Naive thymus-derived CD4-positive, alpha-beta T cell (primary cell): ENCODE measurements at regions of chr16 and their contacts with region 1.

Region 1: DNA sequence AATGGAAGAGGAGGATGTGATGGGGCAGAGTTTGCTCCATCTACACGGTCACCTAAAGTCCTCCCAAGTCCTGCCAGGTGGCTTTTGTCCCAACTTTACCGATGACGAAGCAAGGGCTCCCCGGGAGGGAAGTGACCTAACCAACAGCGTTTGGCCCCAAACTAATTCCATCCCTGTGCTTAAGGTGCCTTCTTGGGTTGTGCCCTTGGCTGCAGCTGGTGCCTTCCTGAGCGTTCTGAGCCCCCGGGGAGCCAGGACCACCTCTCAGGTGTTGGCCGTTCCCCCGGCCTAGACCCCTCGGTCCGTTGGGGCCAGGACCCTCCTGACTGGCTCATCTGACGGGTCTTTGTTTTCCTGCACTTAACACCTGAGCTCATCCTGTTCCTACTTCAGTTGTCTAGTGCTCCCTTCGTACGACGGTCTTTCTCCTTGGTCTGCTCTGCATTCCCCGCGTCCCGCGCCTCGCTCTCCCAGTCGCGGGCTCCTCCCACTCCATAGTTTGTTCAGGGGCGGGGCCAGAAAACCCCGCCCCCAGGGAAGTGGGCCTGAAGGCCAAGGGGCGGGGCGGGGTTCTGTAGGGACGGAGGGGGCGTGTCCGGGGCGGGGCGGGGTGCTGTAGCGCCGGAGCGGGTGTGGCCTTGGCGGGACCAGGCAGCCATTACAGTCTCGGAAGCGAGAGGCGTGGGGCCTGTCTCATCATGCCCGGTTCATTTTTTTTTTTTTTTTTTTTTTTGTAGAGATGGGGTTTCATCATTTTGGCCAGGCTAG is 822 bp upstream of the ZSCAN10 start:
- DNase-seq: peak; percentile 67 to 94 (median 75)
- ATAC-seq: peak; percentile 94
- H3K4me3 ChIP-seq: peak overlapping the region; percentile 46
- H3K4me3 Mint-ChIP-seq: peak overlapping the region; percentile 71 to 98 (median 82)
- H3K27ac ChIP-seq: peak overlapping the region; percentile 35
- H3K27ac Mint-ChIP-seq: peak overlapping the region; percentile 74 to 93 (median 86)
- H3K4me1 ChIP-seq: peaks cover 25 to 31% of the 10 kb centered on the region in 2 donors
- H3K4me1 Mint-ChIP-seq: peaks cover 27 to 65% (median 54%) of the 10 kb centered on the region in 7 donors
- H3K27me3 ChIP-seq: no peaks in the 10 kb centered on the region
- H3K27me3 Mint-ChIP-seq: no peaks in the 10 kb centered on the region

Region 2: GRCh38 chr16:3065069-3065741 is 34.7 kb before region 1 on chr16 and contains the start of gene IL32:
- CTCF ChIA-PET with region 1: interaction called, 7 read pairs
- POLR2A ChIA-PET with region 1: interaction called, 65 read pairs
- intact Hi-C with region 1: no loop called
- DNase-seq: peak in 8 of 9 donors; percentile 43 to 69 (median 64)
- ATAC-seq: peak; percentile 78
- H3K4me3 ChIP-seq: peak within 1 kb of the TSS; percentile 78
- H3K4me3 Mint-ChIP-seq: peak within 1 kb of the TSS; percentile 98 to 100 (median 99)
- H3K27ac ChIP-seq: peak within 1 kb of the TSS; percentile 88
- H3K27ac Mint-ChIP-seq: peak within 1 kb of the TSS; percentile 94 to 100 (median 98)
- H3K4me1 ChIP-seq: peaks cover 25 to 27% of the 10 kb centered on the region in 2 donors
- H3K4me1 Mint-ChIP-seq: peaks cover 46 to 65% (median 60%) of the 10 kb centered on the region in 7 donors
- H3K27me3 ChIP-seq: no peaks in the 10 kb centered on the region
- H3K27me3 Mint-ChIP-seq: no peaks in the 10 kb centered on the region
- total RNA-seq, gene IL32: 351 to 3,697 (median 587) TPM

Region 3: GRCh38 chr16:3158471-3159314 is 58.8 kb after region 1 on chr16:
- CTCF ChIA-PET with region 1: no interaction called
- POLR2A ChIA-PET with region 1: interaction called, 5 read pairs
- intact Hi-C with region 1: loop called (anchors 2 kb)
- DNase-seq: peak; percentile 80 to 98 (median 91)
- ATAC-seq: peak; percentile 97
- H3K4me3 ChIP-seq: peak overlapping the region; percentile 86
- H3K4me3 Mint-ChIP-seq: peak overlapping the region; percentile 87 to 94 (median 92)
- H3K27ac ChIP-seq: peak overlapping the region; percentile 86
- H3K27ac Mint-ChIP-seq: peak overlapping the region; percentile 90 to 99 (median 95)
- H3K4me1 ChIP-seq: peaks cover 5 to 9% of the 10 kb centered on the region in 2 donors
- H3K4me1 Mint-ChIP-seq: peaks cover 10 to 42% (median 28%) of the 10 kb centered on the region in 7 donors
- H3K27me3 ChIP-seq: no peaks in the 10 kb centered on the region
- H3K27me3 Mint-ChIP-seq: peaks cover 0 to 26% (median 0%) of the 10 kb centered on the region in 5 donors